ENCODE measurements at regions of chr11 and their contacts with region 1.

Region 1: GRCh38 chr11:119101759-119102423 is at the start of gene DPAGT1:
- DNase-seq: peak; percentile 94
- ATAC-seq: peak; percentile 92
- H3K4me3 ChIP-seq: peak within 1 kb of the TSS; percentile 87 to 90
- H3K27ac ChIP-seq: peak within 1 kb of the TSS; percentile 99
- H3K4me1 ChIP-seq: peaks cover 21% of the 10 kb centered on the region
- H3K27me3 ChIP-seq: no peaks in the 10 kb centered on the region
- CTCF ChIP-seq: no peak
- total RNA-seq, gene DPAGT1: 72.1 TPM

Region 2: GRCh38 chr11:118791111-118791965 is 310.6 kb before region 1 on chr11 and contains the start of gene DDX6:
- CTCF ChIA-PET with region 1: no interaction called
- POLR2A ChIA-PET with region 1: interaction called, 10 read pairs
- in situ Hi-C with region 1: no loop called
- intact Hi-C with region 1: no loop called
- DNase-seq: no peak
- ATAC-seq: peak; percentile 84
- H3K4me3 ChIP-seq: peak within 1 kb of the TSS; percentile 77 to 91
- H3K27ac ChIP-seq: peak within 1 kb of the TSS; percentile 99
- H3K4me1 ChIP-seq: peaks cover 24% of the 10 kb centered on the region
- H3K27me3 ChIP-seq: no peaks in the 10 kb centered on the region
- CTCF ChIP-seq: no peak; the same call in 1 of the 2 replicates
- total RNA-seq, gene DDX6: 155 TPM

Region 3: DNA sequence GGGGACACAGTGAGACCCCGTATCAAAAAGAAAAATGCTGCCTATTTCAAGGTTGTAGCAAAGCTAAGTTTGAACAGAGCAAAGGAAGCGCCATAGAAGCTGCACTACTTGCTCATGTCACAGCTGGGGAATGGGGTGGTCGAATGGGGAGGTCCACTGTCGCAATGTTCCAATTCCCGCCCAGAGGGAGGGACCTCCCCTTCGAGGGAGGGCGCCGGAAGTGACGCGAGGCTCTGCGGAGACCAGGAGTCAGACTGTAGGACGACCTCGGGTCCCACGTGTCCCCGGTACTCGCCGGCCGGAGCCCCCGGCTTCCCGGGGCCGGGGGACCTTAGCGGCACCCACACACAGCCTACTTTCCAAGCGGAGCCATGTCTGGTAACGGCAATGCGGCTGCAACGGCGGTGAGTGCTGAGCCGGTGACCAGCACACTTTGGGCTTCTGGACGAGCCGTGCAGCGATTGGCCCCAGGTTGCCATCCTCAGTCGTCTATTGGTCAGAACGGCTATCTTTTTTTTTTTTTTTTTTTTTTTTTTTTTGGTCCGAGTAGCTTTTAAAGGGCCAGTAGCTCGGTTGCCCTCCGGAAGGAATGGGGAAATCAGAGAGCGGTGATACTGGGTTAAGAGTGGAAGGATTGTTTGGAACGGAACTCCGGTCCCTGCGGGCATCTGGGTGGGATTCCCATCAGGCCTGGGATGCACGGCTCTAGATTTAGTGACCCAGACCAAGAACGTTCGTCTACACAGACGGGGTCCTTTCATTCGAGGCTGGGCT is 17.0 kb before region 1 on chr11 and contains the start of gene HMBS:
- CTCF ChIA-PET with region 1: interaction called, 7 read pairs
- POLR2A ChIA-PET with region 1: interaction called, 20 read pairs
- in situ Hi-C with region 1: no loop called
- intact Hi-C with region 1: no loop called
- DNase-seq: peak; percentile 91
- ATAC-seq: peak; percentile 98
- H3K4me3 ChIP-seq: peak within 1 kb of the TSS; percentile 73 to 92
- H3K27ac ChIP-seq: peak within 1 kb of the TSS; percentile 94
- H3K4me1 ChIP-seq: peaks cover 10% of the 10 kb centered on the region
- H3K27me3 ChIP-seq: no peaks in the 10 kb centered on the region
- CTCF ChIP-seq: no peak
- total RNA-seq, gene HMBS: 61.6 TPM

Region 4: GRCh38 chr11:119196833-119197483 is 95.1 kb after region 1 on chr11:
- CTCF ChIA-PET with region 1: no interaction called
- POLR2A ChIA-PET with region 1: interaction called, 3 read pairs
- in situ Hi-C with region 1: no loop called
- intact Hi-C with region 1: loop called (anchors 2 kb)
- DNase-seq: peak; percentile 80
- ATAC-seq: peak; percentile 92
- H3K4me3 ChIP-seq: no peak overlapping the region
- H3K27ac ChIP-seq: no peak overlapping the region
- H3K4me1 ChIP-seq: no peaks in the 10 kb centered on the region
- H3K27me3 ChIP-seq: no peaks in the 10 kb centered on the region
- CTCF ChIP-seq: peak; percentile 94

Region 5: DNA sequence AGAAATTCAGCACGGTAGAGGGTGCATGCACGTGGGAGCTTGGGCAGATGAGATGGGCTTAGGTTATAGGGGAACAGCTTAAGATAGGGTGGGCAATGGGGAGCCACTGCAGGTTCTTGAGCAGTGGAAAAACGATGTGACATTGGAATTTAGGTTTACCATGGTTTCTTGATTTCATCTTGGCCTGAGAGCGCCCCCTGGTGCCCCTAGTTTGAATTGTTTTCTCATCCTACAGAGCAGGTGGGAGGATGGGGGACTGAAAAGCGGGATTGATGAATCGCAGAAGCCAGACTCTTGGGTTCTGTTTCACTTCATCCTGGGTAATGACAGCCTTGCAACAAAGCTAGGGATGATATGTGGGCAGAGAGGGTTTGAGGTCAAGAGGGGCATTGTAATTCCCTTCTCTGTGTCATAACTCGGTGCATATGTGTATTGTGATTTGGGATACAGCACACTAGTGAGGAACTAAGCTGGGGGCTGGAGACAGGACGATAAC is 221.7 kb after region 1 on chr11:
- CTCF ChIA-PET with region 1: no interaction called
- POLR2A ChIA-PET with region 1: no interaction called
- in situ Hi-C with region 1: no loop called
- intact Hi-C with region 1: loop called (anchors 2 kb)
- DNase-seq: peak; percentile 66
- ATAC-seq: no peak
- H3K4me3 ChIP-seq: no peak overlapping the region
- H3K27ac ChIP-seq: no peak overlapping the region
- H3K4me1 ChIP-seq: peaks cover 28% of the 10 kb centered on the region
- H3K27me3 ChIP-seq: no peaks in the 10 kb centered on the region
- CTCF ChIP-seq: peak; percentile 96

Measured in Panc1 (cell line).